ENCODE measurements at regions of chr7 and their contacts with region 1.

Region 1: DNA sequence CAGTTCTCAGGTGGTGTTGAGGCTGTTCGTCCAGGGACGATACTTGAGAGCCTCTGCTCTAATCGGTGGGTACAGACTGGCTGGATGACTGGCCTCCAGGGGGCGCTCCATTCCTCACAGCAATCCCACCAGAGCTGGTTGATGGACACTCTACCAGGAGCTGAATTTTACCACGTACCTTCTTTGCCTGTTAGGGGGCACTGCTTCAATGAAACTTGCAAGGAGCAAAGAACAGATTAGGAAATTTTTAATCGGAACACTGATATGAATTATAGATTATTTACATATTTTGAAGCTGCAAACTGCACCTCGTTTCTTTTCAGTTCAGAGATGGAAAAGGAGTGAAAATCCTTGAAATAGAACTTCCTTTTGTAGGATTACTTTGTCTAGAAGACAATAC is 44.9 kb downstream of the KBTBD2 start:
- DNase-seq: peak; percentile 93
- ATAC-seq: peak; percentile 100
- H3K4me3 Mint-ChIP-seq: no peak overlapping the region
- H3K27ac Mint-ChIP-seq: no peak overlapping the region
- H3K4me1 Mint-ChIP-seq: peaks cover 20% of the 10 kb centered on the region
- H3K27me3 Mint-ChIP-seq: peaks cover 28% of the 10 kb centered on the region

Region 2: DNA sequence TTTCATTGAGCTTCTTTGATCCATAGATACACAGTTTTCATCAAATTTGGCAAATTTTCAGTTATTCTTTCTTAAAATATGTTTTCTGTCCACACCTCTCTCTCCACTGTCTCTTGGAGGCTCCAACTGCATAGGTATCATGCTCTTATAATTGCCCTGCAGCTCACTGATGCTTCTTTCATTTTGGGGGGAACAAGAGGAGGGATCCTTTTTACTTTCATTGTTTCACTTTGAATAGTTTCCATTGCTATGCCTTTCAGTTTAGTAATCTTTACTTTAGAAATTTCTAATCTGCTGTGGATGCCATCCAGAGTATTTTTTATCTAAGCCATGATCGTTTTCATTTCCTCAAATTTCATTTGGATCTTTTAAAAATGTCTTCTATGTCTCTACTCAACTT is 11.9 kb after region 1 on chr7:
- CTCF ChIA-PET with region 1: interaction called, 19 read pairs
- DNase-seq: no peak
- ATAC-seq: peak; percentile 20
- H3K4me3 Mint-ChIP-seq: no peak overlapping the region
- H3K27ac Mint-ChIP-seq: no peak overlapping the region
- H3K4me1 Mint-ChIP-seq: peaks cover 13% of the 10 kb centered on the region
- H3K27me3 Mint-ChIP-seq: peaks cover 24% of the 10 kb centered on the region

Region 3: GRCh38 chr7:32905175-32905662 is 58.5 kb after region 1 on chr7:
- CTCF ChIA-PET with region 1: interaction called, 17 read pairs
- DNase-seq: peak; percentile 95
- ATAC-seq: peak; percentile 94
- H3K4me3 Mint-ChIP-seq: peak overlapping the region; percentile 75
- H3K27ac Mint-ChIP-seq: peak overlapping the region; percentile 96
- H3K4me1 Mint-ChIP-seq: peaks cover 18% of the 10 kb centered on the region
- H3K27me3 Mint-ChIP-seq: no peaks in the 10 kb centered on the region

Region 4: GRCh38 chr7:32921896-32922295 is 75.2 kb after region 1 on chr7:
- CTCF ChIA-PET with region 1: no interaction called
- DNase-seq: no peak
- ATAC-seq: no peak
- H3K4me3 Mint-ChIP-seq: no peak overlapping the region
- H3K27ac Mint-ChIP-seq: no peak overlapping the region
- H3K4me1 Mint-ChIP-seq: no peaks in the 10 kb centered on the region
- H3K27me3 Mint-ChIP-seq: no peaks in the 10 kb centered on the region

Region 5: GRCh38 chr7:32948202-32948601 is 101.5 kb after region 1 on chr7:
- CTCF ChIA-PET with region 1: interaction called, 44 read pairs
- DNase-seq: no peak
- ATAC-seq: no peak
- H3K4me3 Mint-ChIP-seq: no peak overlapping the region
- H3K27ac Mint-ChIP-seq: no peak overlapping the region
- H3K4me1 Mint-ChIP-seq: peaks cover 3% of the 10 kb centered on the region
- H3K27me3 Mint-ChIP-seq: peaks cover 21% of the 10 kb centered on the region

Region 6: DNA sequence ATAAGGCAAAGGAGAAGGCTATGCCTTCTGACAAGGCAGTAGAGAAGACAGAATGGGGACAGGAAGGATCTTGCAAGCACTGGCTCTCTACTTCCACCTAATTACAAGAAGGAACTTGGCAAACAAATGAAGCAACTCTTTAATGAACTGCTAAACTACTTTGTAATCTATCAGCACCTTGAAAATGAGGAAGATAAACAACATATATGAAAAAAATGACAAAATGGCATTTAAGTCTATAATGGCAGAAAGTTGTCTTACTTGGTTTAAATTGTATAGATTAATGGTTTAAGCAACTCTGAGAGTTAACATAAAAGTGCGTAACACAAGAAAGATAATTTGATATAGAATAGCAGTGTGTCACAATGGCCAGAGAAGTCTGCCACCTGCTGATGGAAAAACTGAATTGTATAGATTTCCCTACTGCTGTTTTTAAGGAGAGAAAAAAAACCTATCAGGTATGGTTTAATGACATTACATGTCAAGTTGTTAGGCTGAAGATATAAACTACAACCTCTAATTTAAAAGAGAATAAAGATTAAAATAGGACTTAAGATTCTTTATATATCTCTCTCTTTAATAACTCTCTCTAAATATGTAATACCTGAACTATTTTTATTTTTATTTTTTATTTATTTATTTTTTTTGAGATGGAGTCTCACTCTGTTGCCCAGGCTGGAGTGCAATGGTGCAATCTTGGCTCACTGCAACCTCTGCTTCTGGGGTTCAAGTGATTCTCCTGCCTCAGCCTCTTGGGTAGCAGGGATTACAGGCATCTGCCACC is 204.0 kb after region 1 on chr7:
- CTCF ChIA-PET with region 1: interaction called, 17 read pairs
- DNase-seq: no peak
- ATAC-seq: peak; percentile 48
- H3K4me3 Mint-ChIP-seq: no peak overlapping the region
- H3K27ac Mint-ChIP-seq: no peak overlapping the region
- H3K4me1 Mint-ChIP-seq: peaks cover 43% of the 10 kb centered on the region
- H3K27me3 Mint-ChIP-seq: no peaks in the 10 kb centered on the region

Region 7: DNA sequence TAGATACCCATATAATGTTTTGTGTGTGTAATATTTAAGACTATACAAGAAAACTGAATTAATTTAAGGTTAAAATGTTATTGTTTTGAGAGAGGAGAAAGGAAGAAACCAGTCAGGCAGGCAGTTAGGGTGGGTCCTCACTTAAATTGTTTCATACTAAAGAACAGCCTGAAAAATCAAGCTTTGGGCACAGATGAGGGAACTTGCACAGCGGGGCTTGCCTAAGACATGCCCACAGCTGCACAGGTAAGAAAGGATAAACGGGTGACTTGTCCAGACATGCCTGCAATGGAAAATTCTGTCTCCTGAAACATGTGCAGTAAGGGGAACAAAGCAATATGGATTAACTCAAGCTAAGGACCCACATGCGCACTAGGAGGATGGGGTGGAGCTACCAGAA is 441.0 kb after region 1 on chr7:
- CTCF ChIA-PET with region 1: no interaction called
- DNase-seq: no peak
- ATAC-seq: no peak
- H3K4me3 Mint-ChIP-seq: no peak overlapping the region
- H3K27ac Mint-ChIP-seq: no peak overlapping the region
- H3K4me1 Mint-ChIP-seq: no peaks in the 10 kb centered on the region
- H3K27me3 Mint-ChIP-seq: no peaks in the 10 kb centered on the region